ENCODE measurements at regions of chr9 and their contacts with region 1.

Region 1: GRCh38 chr9:73121375-73121935 is 30.2 kb upstream of the ANXA1 start:
- DNase-seq: peak; percentile 52
- H3K4me3 ChIP-seq: no peak overlapping the region
- H3K27ac ChIP-seq: no peak overlapping the region
- H3K4me1 ChIP-seq: peaks cover 27% of the 10 kb centered on the region
- H3K27me3 ChIP-seq: no peaks in the 10 kb centered on the region
- CTCF ChIP-seq: no peak
- POLR2A ChIP-seq: no peak

Region 2: DNA sequence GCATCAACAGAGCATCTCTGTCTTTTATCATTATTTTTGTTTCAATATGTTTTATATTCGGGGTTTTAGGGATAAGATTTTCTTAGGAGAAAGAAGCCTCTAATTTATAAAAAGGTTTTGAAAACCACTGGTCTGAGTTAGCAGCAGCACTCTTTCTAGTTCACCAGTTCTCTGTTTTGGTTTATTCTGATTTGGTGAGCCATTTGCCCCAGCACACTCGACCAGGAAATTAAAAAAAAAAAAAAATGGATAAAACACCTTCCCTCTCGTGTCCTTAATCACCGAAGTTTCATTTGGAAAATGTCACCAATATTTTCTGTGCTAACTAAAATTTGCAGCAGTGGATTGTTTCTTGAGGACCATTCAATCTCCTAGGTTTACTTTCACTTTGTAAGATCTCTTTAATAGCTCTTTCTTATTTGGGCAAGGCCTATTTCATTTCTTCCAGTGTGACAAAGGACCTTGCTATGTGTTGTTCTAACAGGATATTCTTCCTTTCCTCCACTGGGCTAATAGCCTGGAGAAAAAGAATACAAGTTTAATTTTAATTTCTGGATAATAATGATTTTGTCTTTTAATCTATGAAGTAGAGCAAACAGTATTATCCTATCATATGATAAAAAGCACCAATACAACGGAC is 27.6 kb before region 1 on chr9:
- CTCF ChIA-PET with region 1: no interaction called
- POLR2A ChIA-PET with region 1: no interaction called
- dilution Hi-C with region 1: no loop called
- intact Hi-C with region 1: loop called (anchors 1 kb)
- DNase-seq: peak; percentile 40
- H3K4me3 ChIP-seq: peak overlapping the region in 2 of 3 experiments; percentile 33 to 36
- H3K27ac ChIP-seq: peak overlapping the region; percentile 18
- H3K4me1 ChIP-seq: peaks cover 3% of the 10 kb centered on the region
- H3K27me3 ChIP-seq: no peaks in the 10 kb centered on the region
- CTCF ChIP-seq: no peak
- POLR2A ChIP-seq: no peak

Region 3: DNA sequence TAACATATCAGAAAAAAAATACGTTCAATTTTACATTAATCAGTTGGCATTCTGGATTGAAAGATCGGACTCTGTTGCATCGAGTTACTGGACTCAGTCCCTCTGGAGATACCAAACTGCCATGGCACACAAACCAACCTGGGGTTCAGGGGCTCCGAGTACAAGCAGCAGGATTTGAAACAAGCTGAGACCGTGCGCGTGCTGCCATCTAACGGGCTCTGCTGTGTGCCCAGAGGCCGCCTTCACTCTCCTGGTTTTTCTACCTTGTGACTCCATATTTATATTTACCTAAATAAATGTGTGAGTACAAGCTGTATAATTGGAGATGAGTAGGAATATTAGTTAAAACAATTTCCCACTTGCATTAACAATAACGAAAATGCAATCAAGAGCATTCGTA is 78.4 kb after region 1 on chr9:
- CTCF ChIA-PET with region 1: no interaction called
- POLR2A ChIA-PET with region 1: no interaction called
- dilution Hi-C with region 1: no loop called
- intact Hi-C with region 1: no loop called
- DNase-seq: peak; percentile 25
- H3K4me3 ChIP-seq: no peak overlapping the region
- H3K27ac ChIP-seq: no peak overlapping the region
- H3K4me1 ChIP-seq: no peaks in the 10 kb centered on the region
- H3K27me3 ChIP-seq: peaks cover 4 to 9% of the 10 kb centered on the region in 2 experiments
- CTCF ChIP-seq: peak; percentile 16 to 45
- POLR2A ChIP-seq: no peak

Measured in endothelial cell of umbilical vein (primary cell).